Activated CD8-positive, alpha-beta memory T cell treated with anti-CD3 and anti-CD28 coated beads, Interleukin-2, amount 10 ng/mL, durations not matched to agents 7 days and 5 days (primary cell): ENCODE measurements at regions of chr11 and their contacts with region 1.

Region 1: GRCh38 chr11:75031771-75032549 is 43.2 kb downstream of the NEU3 start:
- DNase-seq: peak; percentile 68
- ATAC-seq: peak; percentile 75
- H3K4me3 Mint-ChIP-seq: no peak overlapping the region
- H3K27ac Mint-ChIP-seq: no peak overlapping the region
- H3K4me1 Mint-ChIP-seq: peaks cover 9% of the 10 kb centered on the region
- H3K27me3 Mint-ChIP-seq: no peaks in the 10 kb centered on the region

Region 2: GRCh38 chr11:74783241-74783871 is 248.6 kb before region 1 on chr11:
- CTCF ChIA-PET with region 1: no interaction called
- DNase-seq: peak; percentile 46
- ATAC-seq: peak; percentile 87
- H3K4me3 Mint-ChIP-seq: peak overlapping the region; percentile 6
- H3K27ac Mint-ChIP-seq: peak overlapping the region; percentile 65
- H3K4me1 Mint-ChIP-seq: peaks cover 21% of the 10 kb centered on the region
- H3K27me3 Mint-ChIP-seq: no peaks in the 10 kb centered on the region

Region 3: GRCh38 chr11:75270896-75271418 is 239.0 kb after region 1 on chr11:
- CTCF ChIA-PET with region 1: interaction called, 10 read pairs
- DNase-seq: no peak
- ATAC-seq: no peak
- H3K4me3 Mint-ChIP-seq: no peak overlapping the region
- H3K27ac Mint-ChIP-seq: no peak overlapping the region
- H3K4me1 Mint-ChIP-seq: peaks cover 14% of the 10 kb centered on the region
- H3K27me3 Mint-ChIP-seq: no peaks in the 10 kb centered on the region